Heart right ventricle (tissue), 16 donors: ENCODE measurements at regions of chr17 and their contacts with region 1.

Region 1: DNA sequence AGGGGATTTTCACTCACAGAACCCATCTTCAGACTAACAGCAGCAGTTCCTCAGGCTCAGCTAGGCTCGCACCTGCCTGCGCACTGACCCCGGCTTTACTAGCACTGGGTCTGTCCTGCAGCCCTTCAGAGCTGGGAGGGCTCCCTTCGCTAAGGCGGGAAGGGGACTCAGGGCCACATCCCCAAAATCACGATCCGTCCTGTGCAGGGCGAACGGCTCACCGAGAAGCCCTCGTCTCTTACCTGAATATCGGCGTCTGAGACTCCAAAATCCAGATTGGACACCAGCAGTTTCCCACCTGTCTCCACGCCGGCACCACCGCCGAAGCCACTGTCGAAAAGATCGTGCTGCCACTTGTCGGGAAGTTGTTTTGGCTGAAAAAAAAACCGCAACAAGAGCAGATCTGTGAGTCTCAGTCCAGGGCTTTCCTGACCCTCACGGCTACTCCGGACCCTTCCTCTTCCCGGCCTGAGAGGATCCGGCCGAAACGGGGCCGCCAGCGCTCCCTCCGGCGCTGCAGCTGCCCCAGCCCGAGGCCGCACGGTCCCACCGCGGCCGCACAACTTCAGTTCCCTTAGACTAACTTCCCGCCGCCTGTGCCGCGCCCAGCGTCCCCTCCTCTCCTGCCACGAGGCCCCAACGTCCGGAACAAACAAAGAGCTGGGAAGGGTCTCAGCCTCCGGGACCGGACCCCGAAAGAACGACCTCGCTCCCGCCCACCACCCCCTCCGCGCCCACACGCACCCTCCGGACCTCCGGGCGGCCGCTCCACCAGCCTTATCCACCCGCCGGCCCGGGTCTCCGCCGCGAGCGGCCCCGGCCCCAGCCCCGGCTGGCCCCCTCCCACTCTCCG is 713 bp downstream of the ALYREF start:
- DNase-seq: no peak
- ATAC-seq: no peak
- H3K4me3 ChIP-seq: peak overlapping the region; percentile 72 to 100 (median 98)
- H3K27ac ChIP-seq: peak overlapping the region; percentile 64 to 98 (median 96)
- H3K4me1 ChIP-seq: peaks cover 11 to 39% (median 27%) of the 10 kb centered on the region in 9 donors
- H3K27me3 ChIP-seq: no peaks in the 10 kb centered on the region
- CTCF ChIP-seq: no peak

Region 2: DNA sequence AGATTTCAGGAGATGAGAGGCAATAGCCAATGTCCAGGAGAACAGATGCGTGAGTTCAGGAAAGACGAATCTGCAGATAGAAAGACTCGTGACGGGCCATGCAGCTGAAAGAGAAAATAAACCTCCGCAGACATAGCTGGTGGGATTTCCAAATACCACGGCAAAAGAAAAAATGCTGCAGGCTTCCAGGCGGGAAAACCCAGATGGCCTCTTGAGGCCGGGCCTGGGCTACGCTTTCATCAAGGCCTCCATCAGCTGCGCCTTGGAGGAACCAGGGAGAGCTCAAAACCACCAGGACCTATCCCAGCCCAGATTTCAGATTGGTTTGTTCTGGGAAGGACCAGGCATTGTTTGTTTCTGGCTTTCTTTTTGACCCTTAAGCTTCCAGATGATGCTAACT is 1837.6 kb before region 1 on chr17:
- intact Hi-C with region 1: loop called in 1 of 10 experiments (anchors 5 kb)
- DNase-seq: no peak
- ATAC-seq: no peak
- H3K4me3 ChIP-seq: no peak overlapping the region
- H3K27ac ChIP-seq: no peak overlapping the region
- H3K4me1 ChIP-seq: peaks cover 0 to 16% (median 0%) of the 10 kb centered on the region in 9 donors
- H3K27me3 ChIP-seq: no peaks in the 10 kb centered on the region
- CTCF ChIP-seq: no peak

Region 3: DNA sequence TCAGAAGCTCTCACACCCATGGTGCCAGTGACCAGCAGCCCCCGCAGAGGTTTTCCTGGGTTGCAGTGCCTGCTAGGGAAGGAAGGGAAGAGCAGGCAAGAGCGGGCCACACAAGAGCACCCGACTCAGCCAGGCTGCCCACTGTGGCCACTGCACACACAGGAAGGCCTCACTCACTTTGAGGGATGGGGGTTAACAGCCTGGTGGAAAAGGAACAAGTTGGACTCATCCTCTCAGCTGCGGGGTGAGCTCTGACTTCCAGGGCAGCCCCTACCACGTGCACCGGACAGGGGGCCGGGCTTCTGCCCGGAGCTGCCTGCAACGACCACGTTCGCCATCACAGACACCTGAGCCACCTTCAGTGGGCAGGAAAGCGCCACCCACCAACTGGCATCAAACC is 38.4 kb before region 1 on chr17:
- intact Hi-C with region 1: loop called in 1 of 10 experiments (anchors 1 kb)
- DNase-seq: no peak
- ATAC-seq: no peak
- H3K4me3 ChIP-seq: no peak overlapping the region
- H3K27ac ChIP-seq: no peak overlapping the region
- H3K4me1 ChIP-seq: peaks cover 0 to 22% (median 8%) of the 10 kb centered on the region in 9 donors
- H3K27me3 ChIP-seq: no peaks in the 10 kb centered on the region
- CTCF ChIP-seq: no peak